Mammary epithelial cell (primary cell): ENCODE measurements at regions of chr17 and their contacts with region 1.

Region 1: DNA sequence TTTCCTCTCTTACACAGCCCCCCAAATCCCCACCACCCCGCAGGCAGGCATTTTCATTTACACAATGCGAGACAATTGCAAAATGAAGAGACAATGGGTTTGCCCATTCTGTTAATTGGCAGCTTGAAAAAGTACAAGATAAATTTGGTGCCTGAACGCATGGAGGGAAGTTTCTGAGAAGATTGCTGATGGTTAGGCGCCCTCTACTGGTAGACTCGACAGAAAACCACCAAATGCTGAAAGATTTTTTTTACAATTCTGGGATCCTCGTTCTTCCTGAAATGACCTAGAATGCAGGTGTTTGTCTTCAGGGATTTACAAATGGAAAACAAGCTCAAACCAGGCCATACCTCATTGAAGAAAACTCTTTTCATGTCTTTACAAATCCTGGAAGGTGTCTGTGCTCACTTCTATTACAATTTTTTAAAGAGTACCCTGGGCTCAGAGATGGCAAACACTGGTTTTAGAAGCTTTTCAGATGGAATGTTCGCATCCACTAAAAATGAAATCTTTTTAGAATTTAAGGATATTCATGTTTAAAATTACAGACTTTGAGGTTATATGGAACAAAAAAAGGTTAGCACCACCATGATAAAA is 338.5 kb downstream of the PMP22 start:
- DNase-seq: peak; percentile 40
- H3K4me3 ChIP-seq: no peak overlapping the region
- H3K27ac ChIP-seq: no peak overlapping the region
- H3K4me1 ChIP-seq: no peaks in the 10 kb centered on the region
- H3K27me3 ChIP-seq: peaks cover 2% of the 10 kb centered on the region
- CTCF ChIP-seq: peak; percentile 63 to 78

Region 2: GRCh38 chr17:13337864-13338371 is 1588.7 kb before region 1 on chr17:
- CTCF ChIA-PET with region 1: no interaction called
- dilution Hi-C with region 1: no loop called
- in situ Hi-C with region 1: no loop called
- intact Hi-C with region 1: loop called (anchors 5 kb)
- DNase-seq: peak; percentile 43
- H3K4me3 ChIP-seq: peak overlapping the region; percentile 11 to 47 (median 46)
- H3K27ac ChIP-seq: peak overlapping the region; percentile 34
- H3K4me1 ChIP-seq: peaks cover 4% of the 10 kb centered on the region
- H3K27me3 ChIP-seq: no peaks in the 10 kb centered on the region
- CTCF ChIP-seq: peak; percentile 77 to 85

Region 3: DNA sequence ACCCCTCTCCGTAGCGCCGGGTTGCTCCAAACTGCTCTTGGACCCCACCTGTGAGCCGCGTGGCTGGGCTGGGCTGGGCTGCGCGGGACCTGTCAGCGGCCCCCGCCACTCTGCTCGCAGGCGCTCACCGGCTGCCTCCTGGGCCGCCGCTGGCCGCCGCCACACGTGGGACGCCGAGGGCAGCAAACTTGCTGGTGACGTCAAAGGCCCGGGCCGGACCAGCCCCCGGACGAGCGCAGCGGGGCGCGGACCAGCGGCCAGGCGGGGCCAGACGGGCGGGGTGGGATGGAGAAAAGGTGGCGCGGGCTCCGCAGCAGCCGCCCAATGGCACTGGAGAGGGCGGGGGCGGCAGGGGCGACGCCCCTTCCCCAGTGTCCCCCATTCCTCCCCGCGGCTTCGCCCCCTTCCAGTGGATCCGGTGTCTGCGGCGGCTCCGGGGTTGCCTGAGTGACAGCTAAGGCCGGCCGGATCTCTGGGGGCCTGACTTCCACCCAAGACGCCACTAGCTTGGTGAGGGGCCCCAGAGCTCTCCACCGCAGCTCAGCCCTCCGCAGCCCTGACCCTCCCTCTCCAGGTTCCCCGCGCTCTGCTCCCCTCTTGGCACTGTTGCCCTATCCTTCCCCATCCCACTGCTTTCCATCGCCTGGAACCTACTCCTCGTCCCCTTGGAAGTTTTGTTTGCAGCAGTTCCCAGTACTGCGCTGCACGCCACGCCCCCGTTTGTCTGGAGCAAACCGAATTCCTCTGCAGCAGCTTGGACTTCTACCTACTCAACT is 1324.7 kb before region 1 on chr17 and contains the start of gene HS3ST3A1:
- CTCF ChIA-PET with region 1: no interaction called
- dilution Hi-C with region 1: no loop called
- in situ Hi-C with region 1: loop called (anchors 25 kb)
- intact Hi-C with region 1: loop called (anchors 5 kb)
- DNase-seq: peak; percentile 57
- H3K4me3 ChIP-seq: peak within 1 kb of the TSS; percentile 50 to 71 (median 53)
- H3K27ac ChIP-seq: peak within 1 kb of the TSS; percentile 12
- H3K4me1 ChIP-seq: peaks cover 14% of the 10 kb centered on the region
- H3K27me3 ChIP-seq: peaks cover 4% of the 10 kb centered on the region
- CTCF ChIP-seq: no peak
- total RNA-seq, gene HS3ST3A1: 1.0 to 1.7 TPM

Region 4: DNA sequence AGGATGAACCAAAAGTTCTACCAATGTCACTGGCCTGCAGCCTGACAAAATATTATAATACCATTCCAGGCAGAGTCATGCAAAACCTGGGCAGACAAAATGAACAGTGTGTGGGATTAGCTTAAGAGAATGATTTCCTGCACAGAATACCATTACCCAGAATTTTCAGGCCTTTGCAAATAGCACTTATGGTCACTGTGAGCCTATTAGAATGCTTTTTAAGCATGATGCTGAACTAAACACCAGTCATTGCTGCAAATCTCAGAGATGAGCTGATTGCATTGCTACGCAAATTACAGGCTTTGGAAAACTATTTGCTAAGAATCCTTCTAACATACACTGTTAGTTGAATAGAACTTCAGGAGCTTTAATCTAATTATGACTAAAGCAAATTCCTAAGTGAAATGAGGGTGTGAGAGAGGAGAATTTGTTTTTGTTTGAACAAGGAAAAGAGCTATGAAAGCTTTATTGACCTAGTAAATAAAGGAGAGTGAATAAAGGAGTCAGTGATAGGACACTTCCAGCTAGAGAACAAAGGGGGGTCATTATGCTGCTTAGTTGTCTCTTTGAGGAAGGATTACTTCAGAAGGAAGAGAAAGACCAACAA is 226.9 kb before region 1 on chr17:
- CTCF ChIA-PET with region 1: no interaction called
- dilution Hi-C with region 1: no loop called
- in situ Hi-C with region 1: no loop called
- intact Hi-C with region 1: no loop called
- DNase-seq: no peak
- H3K4me3 ChIP-seq: no peak overlapping the region
- H3K27ac ChIP-seq: no peak overlapping the region
- H3K4me1 ChIP-seq: no peaks in the 10 kb centered on the region
- H3K27me3 ChIP-seq: no peaks in the 10 kb centered on the region
- CTCF ChIP-seq: no peak

Region 5: DNA sequence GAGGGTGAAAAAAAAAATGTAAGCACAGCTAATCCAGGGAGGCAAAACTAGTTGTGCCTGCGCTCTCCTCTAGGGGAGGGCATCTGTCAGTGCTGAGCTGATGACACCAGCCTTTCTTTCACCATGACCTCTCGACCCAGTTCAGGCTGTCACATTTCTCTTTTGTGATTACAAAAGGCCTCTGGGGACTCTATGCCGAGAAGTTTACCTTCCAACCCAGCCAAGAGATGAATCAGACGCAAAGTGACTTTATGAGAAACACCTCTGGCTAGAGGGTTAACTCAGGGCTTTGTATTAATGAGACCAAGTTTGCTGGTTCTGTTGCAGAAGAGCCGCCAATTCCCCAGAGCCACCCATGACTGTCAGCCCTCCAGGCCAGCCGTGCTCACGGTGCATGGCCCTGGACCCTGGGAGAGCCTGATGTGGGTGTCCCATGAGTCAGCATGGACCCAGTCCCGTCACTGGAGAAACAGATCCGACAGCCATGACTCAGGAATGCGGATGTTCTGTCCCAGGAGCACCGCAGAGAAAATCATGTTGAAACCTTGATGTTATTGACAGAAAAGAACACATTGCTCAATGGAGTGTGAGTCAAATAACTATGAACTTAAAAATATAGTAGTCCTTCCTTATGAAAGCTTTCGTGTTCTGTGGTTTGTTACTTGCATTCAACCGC is 188.5 kb before region 1 on chr17:
- CTCF ChIA-PET with region 1: no interaction called
- dilution Hi-C with region 1: no loop called
- in situ Hi-C with region 1: no loop called
- intact Hi-C with region 1: loop called (anchors 1 kb)
- DNase-seq: peak; percentile 99
- H3K4me3 ChIP-seq: no peak overlapping the region
- H3K27ac ChIP-seq: peak overlapping the region; percentile 70
- H3K4me1 ChIP-seq: peaks cover 30% of the 10 kb centered on the region
- H3K27me3 ChIP-seq: no peaks in the 10 kb centered on the region
- CTCF ChIP-seq: peak; percentile 42 to 70

Region 6: GRCh38 chr17:14886240-14886639 is 40.4 kb before region 1 on chr17:
- CTCF ChIA-PET with region 1: no interaction called
- dilution Hi-C with region 1: no loop called
- in situ Hi-C with region 1: no loop called
- intact Hi-C with region 1: loop called (anchors 1 kb)
- DNase-seq: peak; percentile 44
- H3K4me3 ChIP-seq: no peak overlapping the region
- H3K27ac ChIP-seq: no peak overlapping the region
- H3K4me1 ChIP-seq: no peaks in the 10 kb centered on the region
- H3K27me3 ChIP-seq: no peaks in the 10 kb centered on the region
- CTCF ChIP-seq: peak; percentile 39 to 45